Endothelial cell of umbilical vein (primary cell): ENCODE measurements at regions of chr2 and their contacts with region 1.

Region 1: GRCh38 chr2:216666461-216667233 is 28.7 kb downstream of the IGFBP5 start:
- DNase-seq: peak; percentile 74
- H3K4me3 ChIP-seq: no peak overlapping the region
- H3K27ac ChIP-seq: no peak overlapping the region
- H3K4me1 ChIP-seq: peaks cover 8% of the 10 kb centered on the region
- H3K27me3 ChIP-seq: peaks cover 0 to 4% of the 10 kb centered on the region in 2 experiments
- CTCF ChIP-seq: peak; percentile 97 to 98
- POLR2A ChIP-seq: no peak

Region 2: GRCh38 chr2:216034065-216034464 is 632.6 kb before region 1 on chr2:
- CTCF ChIA-PET with region 1: interaction called, 11 read pairs
- POLR2A ChIA-PET with region 1: no interaction called
- dilution Hi-C with region 1: no loop called
- intact Hi-C with region 1: loop called (anchors 1 kb)
- DNase-seq: peak; percentile 77
- H3K4me3 ChIP-seq: no peak overlapping the region
- H3K27ac ChIP-seq: no peak overlapping the region
- H3K4me1 ChIP-seq: no peaks in the 10 kb centered on the region
- H3K27me3 ChIP-seq: no peaks in the 10 kb centered on the region
- CTCF ChIP-seq: peak; percentile 84 to 86
- POLR2A ChIP-seq: no peak

Region 3: DNA sequence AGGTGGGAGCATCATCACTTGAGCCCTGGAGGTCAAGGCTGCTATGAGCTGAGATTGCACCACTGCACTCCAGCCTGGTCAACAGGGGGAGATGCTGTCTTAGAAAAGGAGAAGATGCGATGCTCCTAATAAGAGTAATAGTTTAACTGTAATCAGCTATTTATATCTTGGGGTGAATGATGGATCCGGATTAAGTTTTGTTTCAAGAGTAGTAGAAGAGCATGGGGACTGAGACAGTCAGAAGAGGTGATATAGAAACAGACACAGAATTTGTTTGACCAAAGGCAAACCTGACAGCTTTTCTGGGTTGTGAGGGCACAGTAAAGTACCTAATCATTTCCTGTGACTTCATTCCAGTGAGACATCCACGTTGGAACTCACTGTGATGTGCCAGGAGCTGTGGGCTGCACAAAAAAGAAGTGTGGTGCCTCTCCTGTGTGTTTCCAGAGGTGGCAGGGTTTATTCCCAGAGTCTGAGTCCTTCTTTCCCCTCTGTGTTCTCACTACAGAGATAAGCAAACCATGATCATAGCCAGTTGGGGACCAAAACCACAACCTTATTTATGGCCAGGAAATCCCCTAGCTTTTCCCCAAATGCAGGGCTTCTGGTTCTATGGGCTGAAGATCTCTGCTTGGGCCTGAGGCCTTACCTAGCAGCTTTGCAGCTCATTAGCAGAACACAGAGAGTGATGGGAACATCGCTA is 443.8 kb before region 1 on chr2:
- CTCF ChIA-PET with region 1: interaction called, 6 read pairs
- POLR2A ChIA-PET with region 1: no interaction called
- dilution Hi-C with region 1: no loop called
- intact Hi-C with region 1: loop called (anchors 5 kb)
- DNase-seq: peak; percentile 32
- H3K4me3 ChIP-seq: no peak overlapping the region
- H3K27ac ChIP-seq: no peak overlapping the region
- H3K4me1 ChIP-seq: peaks cover 30% of the 10 kb centered on the region
- H3K27me3 ChIP-seq: no peaks in the 10 kb centered on the region
- CTCF ChIP-seq: peak; percentile 9 to 26
- POLR2A ChIP-seq: no peak

Region 4: DNA sequence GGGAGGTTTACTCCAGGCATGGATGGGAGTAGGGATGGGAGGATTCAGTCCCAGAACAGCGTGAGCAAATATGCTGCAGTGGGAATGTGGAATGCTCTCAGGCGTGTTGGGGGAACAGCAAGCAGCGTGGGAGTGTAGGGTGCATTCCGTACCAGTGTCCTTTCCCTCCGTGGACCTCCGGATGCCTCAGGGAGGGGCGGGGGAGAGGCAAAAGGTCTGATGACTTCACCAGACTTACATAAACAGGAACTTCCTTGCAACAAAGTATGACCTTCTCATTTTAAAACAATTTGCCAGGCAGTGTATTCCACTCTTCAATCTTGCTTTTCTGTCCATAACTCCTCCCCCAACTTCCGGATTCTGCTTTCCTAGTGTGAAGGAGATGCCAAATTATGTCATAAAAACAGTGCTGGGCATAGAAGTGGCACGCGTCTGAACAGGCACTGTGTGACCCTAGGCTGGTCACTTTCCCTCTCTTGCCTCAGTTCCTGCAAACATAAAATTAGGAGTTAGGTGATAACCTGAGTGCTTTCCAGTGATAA is 131.1 kb before region 1 on chr2:
- CTCF ChIA-PET with region 1: interaction called, 13 read pairs
- POLR2A ChIA-PET with region 1: no interaction called
- dilution Hi-C with region 1: no loop called
- intact Hi-C with region 1: loop called (anchors 1 kb)
- DNase-seq: peak; percentile 96
- H3K4me3 ChIP-seq: no peak overlapping the region
- H3K27ac ChIP-seq: peak overlapping the region; percentile 66
- H3K4me1 ChIP-seq: peaks cover 36% of the 10 kb centered on the region
- H3K27me3 ChIP-seq: no peaks in the 10 kb centered on the region
- CTCF ChIP-seq: no peak
- POLR2A ChIP-seq: peak; percentile 68

Region 5: DNA sequence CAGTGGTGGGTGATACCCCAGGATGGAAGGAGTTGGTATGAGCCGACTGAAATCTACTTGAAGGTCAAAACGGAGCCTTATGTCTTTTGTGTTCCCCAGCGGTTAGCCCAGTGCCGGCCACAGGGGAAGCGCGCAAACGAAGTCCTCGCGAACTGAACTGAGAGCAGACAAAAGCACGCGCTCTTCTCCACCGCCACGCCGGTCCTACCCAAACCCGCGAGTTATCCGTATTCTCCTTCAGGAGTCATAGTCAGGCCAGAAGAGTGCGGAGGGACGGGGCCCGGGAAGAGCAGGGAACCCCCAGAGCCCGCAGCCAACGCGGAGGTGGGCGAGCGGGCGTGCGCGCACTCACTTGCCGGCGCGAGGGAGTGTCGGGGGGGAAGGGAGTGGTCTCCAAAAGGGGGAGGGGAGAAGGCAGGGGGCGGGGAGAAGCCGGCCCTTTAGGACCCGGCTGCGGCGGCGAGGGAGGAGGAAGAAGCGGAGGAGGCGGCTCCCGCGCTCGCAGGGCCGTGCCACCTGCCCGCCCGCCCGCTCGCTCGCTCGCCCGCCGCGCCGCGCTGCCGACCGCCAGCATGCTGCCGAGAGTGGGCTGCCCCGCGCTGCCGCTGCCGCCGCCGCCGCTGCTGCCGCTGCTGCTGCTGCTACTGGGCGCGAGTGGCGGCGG is 33.6 kb before region 1 on chr2 and contains the start of gene IGFBP2:
- CTCF ChIA-PET with region 1: interaction called, 12 read pairs
- POLR2A ChIA-PET with region 1: no interaction called
- dilution Hi-C with region 1: no loop called
- intact Hi-C with region 1: loop called (anchors 1 kb)
- DNase-seq: peak; percentile 56
- H3K4me3 ChIP-seq: peak within 1 kb of the TSS; percentile 52 to 79 (median 59)
- H3K27ac ChIP-seq: no peak within 1 kb of the TSS
- H3K4me1 ChIP-seq: peaks cover 30% of the 10 kb centered on the region
- H3K27me3 ChIP-seq: peaks cover 6 to 9% of the 10 kb centered on the region in 2 experiments
- CTCF ChIP-seq: no peak
- POLR2A ChIP-seq: no peak
- total RNA-seq, gene IGFBP2: 212 and 229 TPM in 2 replicates

Region 6: GRCh38 chr2:216807857-216808272 is 141.2 kb after region 1 on chr2:
- CTCF ChIA-PET with region 1: no interaction called
- POLR2A ChIA-PET with region 1: no interaction called
- dilution Hi-C with region 1: no loop called
- intact Hi-C with region 1: no loop called
- DNase-seq: peak; percentile 13
- H3K4me3 ChIP-seq: no peak overlapping the region
- H3K27ac ChIP-seq: no peak overlapping the region
- H3K4me1 ChIP-seq: no peaks in the 10 kb centered on the region
- H3K27me3 ChIP-seq: no peaks in the 10 kb centered on the region
- CTCF ChIP-seq: no peak
- POLR2A ChIP-seq: no peak